Sigmoid colon (tissue), 7 donors: ENCODE measurements at regions of chr17 and their contacts with region 1.

Region 1: GRCh38 chr17:15260376-15261257 is 4.5 kb downstream of the PMP22 start:
- DNase-seq: peak; percentile 97
- H3K4me3 ChIP-seq: peak overlapping the region; percentile 61 to 94 (median 80)
- H3K27ac ChIP-seq: peak overlapping the region; percentile 89 to 99 (median 94)
- H3K4me1 ChIP-seq: peaks cover 0 to 69% (median 57%) of the 10 kb centered on the region in 4 donors
- H3K27me3 ChIP-seq: no peaks in the 10 kb centered on the region
- CTCF ChIP-seq: peak in 3 of 4 experiments; percentile 23 to 79 (median 29)
- EP300 ChIP-seq: peak in 1 of 4 donors; percentile 22
- POLR2A ChIP-seq: no peak

Region 2: DNA sequence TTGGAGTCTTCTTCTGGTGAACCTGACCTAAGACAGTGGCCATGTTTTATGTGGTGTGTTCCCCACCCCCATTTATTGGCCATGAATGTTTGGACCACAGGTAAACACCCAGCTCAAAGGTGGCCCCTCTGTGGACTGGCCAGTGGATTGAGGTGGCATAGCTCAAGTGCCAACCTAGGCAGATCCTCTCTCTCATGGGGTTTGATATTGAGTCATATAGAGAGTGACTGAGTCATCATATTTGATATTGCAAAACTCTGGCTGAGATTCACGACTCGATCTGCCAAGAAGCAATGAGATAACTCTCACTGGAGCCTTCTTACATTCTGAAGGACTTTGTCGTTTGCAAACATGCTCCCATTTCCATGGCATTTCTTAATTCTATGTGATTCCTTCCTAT is 91.3 kb after region 1 on chr17:
- intact Hi-C with region 1: loop called (anchors 1 kb)
- DNase-seq: peak; percentile 82
- H3K4me3 ChIP-seq: no peak overlapping the region
- H3K27ac ChIP-seq: peak overlapping the region; percentile 71 to 91 (median 88)
- H3K4me1 ChIP-seq: peaks cover 0 to 54% (median 34%) of the 10 kb centered on the region in 4 donors
- H3K27me3 ChIP-seq: no peaks in the 10 kb centered on the region
- CTCF ChIP-seq: no peak
- EP300 ChIP-seq: no peak
- POLR2A ChIP-seq: no peak

Region 3: GRCh38 chr17:15431196-15431595 is 170.6 kb after region 1 on chr17:
- intact Hi-C with region 1: loop called (anchors 1 kb)
- DNase-seq: peak; percentile 93
- H3K4me3 ChIP-seq: no peak overlapping the region
- H3K27ac ChIP-seq: peak overlapping the region; percentile 50 to 88 (median 76)
- H3K4me1 ChIP-seq: peaks cover 0 to 53% (median 46%) of the 10 kb centered on the region in 4 donors
- H3K27me3 ChIP-seq: no peaks in the 10 kb centered on the region
- CTCF ChIP-seq: no peak
- EP300 ChIP-seq: peak; percentile 98 to 100 (median 100)
- POLR2A ChIP-seq: no peak

Region 4: GRCh38 chr17:15502369-15503112 is 241.9 kb after region 1 on chr17:
- intact Hi-C with region 1: loop called (anchors 1 kb)
- DNase-seq: peak; percentile 97
- H3K4me3 ChIP-seq: peak overlapping the region; percentile 21 to 44 (median 41)
- H3K27ac ChIP-seq: peak overlapping the region; percentile 72 to 82 (median 80)
- H3K4me1 ChIP-seq: peaks cover 0 to 19% (median 13%) of the 10 kb centered on the region in 4 donors
- H3K27me3 ChIP-seq: no peaks in the 10 kb centered on the region
- CTCF ChIP-seq: peak; percentile 88 to 89 (median 88)
- EP300 ChIP-seq: peak in 1 of 4 donors; percentile 29
- POLR2A ChIP-seq: no peak